ENCODE measurements at regions of chr20 and their contacts with region 1.

Region 1: DNA sequence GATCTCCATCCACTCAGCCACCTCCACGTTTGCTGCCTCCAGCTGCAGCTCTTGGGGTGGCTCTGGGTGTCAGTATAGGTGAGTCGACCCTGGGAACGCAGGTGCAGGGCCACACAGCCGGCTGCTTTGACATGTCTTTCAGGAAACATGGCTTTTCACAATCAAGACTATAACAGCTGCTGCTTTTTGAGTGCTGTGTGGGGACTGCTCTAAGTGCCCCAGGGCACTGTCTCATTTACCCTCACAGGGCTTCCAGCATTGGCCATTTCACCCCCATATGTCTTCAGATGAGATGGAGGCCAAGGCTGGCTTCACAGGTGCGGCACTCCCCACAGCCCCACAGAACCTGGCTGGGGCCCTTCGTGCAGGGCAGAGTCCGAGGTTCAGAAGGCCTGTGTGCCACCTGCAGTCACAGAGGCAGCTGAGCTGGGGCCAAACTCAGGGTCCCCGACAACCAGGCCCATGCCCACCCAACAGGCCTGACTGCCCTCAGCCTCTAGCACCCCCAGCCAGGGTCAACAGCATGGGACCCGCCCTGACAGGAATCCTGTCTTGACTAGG is 14.9 kb upstream of the CST7 start:
- DNase-seq: no peak
- H3K4me3 ChIP-seq: no peak overlapping the region
- H3K4me3 Mint-ChIP-seq: no peak overlapping the region
- H3K27ac ChIP-seq: no peak overlapping the region
- H3K27ac Mint-ChIP-seq: no peak overlapping the region
- H3K4me1 ChIP-seq: peaks cover 30% of the 10 kb centered on the region
- H3K4me1 Mint-ChIP-seq: peaks cover 37 to 48% (median 39%) of the 10 kb centered on the region in 3 donors
- H3K27me3 ChIP-seq: no peaks in the 10 kb centered on the region
- H3K27me3 Mint-ChIP-seq: peaks cover 0 to 2% of the 10 kb centered on the region in 2 donors

Region 2: GRCh38 chr20:24948939-24949679 is 14.9 kb after region 1 on chr20 and contains the start of gene CST7:
- CTCF ChIA-PET with region 1: interaction called, 50 read pairs
- POLR2A ChIA-PET with region 1: interaction called, 13 read pairs
- DNase-seq: peak; percentile 70 to 96 (median 87)
- H3K4me3 ChIP-seq: peak within 1 kb of the TSS; percentile 81
- H3K4me3 Mint-ChIP-seq: peak within 1 kb of the TSS; percentile 90 to 99 (median 96)
- H3K27ac ChIP-seq: peak within 1 kb of the TSS; percentile 94
- H3K27ac Mint-ChIP-seq: peak within 1 kb of the TSS; percentile 92 to 100 (median 98)
- H3K4me1 ChIP-seq: peaks cover 27% of the 10 kb centered on the region
- H3K4me1 Mint-ChIP-seq: peaks cover 68 to 92% (median 72%) of the 10 kb centered on the region in 3 donors
- H3K27me3 ChIP-seq: no peaks in the 10 kb centered on the region
- H3K27me3 Mint-ChIP-seq: no peaks in the 10 kb centered on the region
- total RNA-seq, gene CST7: 124 to 131 TPM

Region 3: GRCh38 chr20:24960302-24960801 is 26.2 kb after region 1 on chr20:
- CTCF ChIA-PET with region 1: interaction called, 50 read pairs
- POLR2A ChIA-PET with region 1: interaction called, 13 read pairs
- DNase-seq: peak in 1 of 5 donors; percentile 50
- H3K4me3 ChIP-seq: no peak overlapping the region
- H3K4me3 Mint-ChIP-seq: peak overlapping the region; percentile 24 to 92 (median 73)
- H3K27ac ChIP-seq: peak overlapping the region; percentile 90
- H3K27ac Mint-ChIP-seq: peak overlapping the region; percentile 97 to 100 (median 99)
- H3K4me1 ChIP-seq: peaks cover 84% of the 10 kb centered on the region
- H3K4me1 Mint-ChIP-seq: peaks cover 70 to 96% (median 80%) of the 10 kb centered on the region in 3 donors
- H3K27me3 ChIP-seq: no peaks in the 10 kb centered on the region
- H3K27me3 Mint-ChIP-seq: peaks cover 0 to 2% of the 10 kb centered on the region in 2 donors

Region 4: GRCh38 chr20:25065625-25066338 is 131.6 kb after region 1 on chr20:
- CTCF ChIA-PET with region 1: interaction called, 18 read pairs
- POLR2A ChIA-PET with region 1: no interaction called
- DNase-seq: peak; percentile 42 to 77 (median 63)
- H3K4me3 ChIP-seq: no peak overlapping the region
- H3K4me3 Mint-ChIP-seq: peak overlapping the region in 1 of 7 donors; percentile 29
- H3K27ac ChIP-seq: no peak overlapping the region
- H3K27ac Mint-ChIP-seq: peak overlapping the region in 2 of 8 donors; percentile 41 to 83
- H3K4me1 ChIP-seq: peaks cover 4% of the 10 kb centered on the region
- H3K4me1 Mint-ChIP-seq: peaks cover 3 to 9% (median 7%) of the 10 kb centered on the region in 3 donors
- H3K27me3 ChIP-seq: no peaks in the 10 kb centered on the region
- H3K27me3 Mint-ChIP-seq: peaks cover 3 to 26% of the 10 kb centered on the region in 2 donors